ENCODE measurements at regions of chr5 and their contacts with region 1.

Region 1: GRCh38 chr5:93735378-93735777 is 6.0 kb downstream of the POU5F2 start:
- DNase-seq: peak; percentile 87
- H3K4me3 ChIP-seq: no peak overlapping the region
- H3K27ac ChIP-seq: no peak overlapping the region
- H3K4me1 ChIP-seq: peaks cover 7% of the 10 kb centered on the region
- H3K27me3 ChIP-seq: no peaks in the 10 kb centered on the region
- CTCF ChIP-seq: no peak
- POLR2A ChIP-seq: no peak

Region 2: DNA sequence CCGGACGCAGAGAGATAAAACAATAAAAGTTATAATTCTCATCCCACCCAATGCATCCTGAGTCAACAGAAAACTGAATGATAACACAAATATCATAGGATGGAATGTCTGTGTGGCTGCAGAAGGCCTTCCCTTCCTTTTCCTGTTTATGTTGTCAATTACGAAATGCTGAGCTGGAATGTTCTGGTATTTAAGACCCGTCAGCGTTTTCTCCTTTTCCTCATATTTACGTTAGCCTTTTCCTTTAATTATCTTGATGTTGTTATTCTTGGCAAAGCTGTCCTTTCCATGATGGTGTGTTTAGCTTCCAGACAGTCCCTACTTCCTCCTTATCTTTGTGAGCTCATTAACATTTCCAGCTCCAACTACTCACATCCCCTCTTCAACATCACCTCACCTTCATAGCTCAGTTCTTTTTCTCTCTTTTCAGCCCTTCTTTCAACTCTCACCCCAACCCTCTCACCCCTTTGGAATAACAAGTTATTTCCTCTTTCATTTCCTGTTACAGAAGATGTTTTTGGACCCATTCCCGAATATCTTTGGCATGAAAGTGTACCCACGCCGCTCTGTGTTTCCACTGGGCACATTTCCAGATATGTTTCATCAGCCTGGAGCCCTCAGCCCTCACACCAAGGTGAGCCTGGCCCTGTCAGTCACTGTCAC is 376.0 kb before region 1 on chr5:
- CTCF ChIA-PET with region 1: no interaction called
- POLR2A ChIA-PET with region 1: no interaction called
- dilution Hi-C with region 1: no loop called
- intact Hi-C with region 1: no loop called
- DNase-seq: peak; percentile 98
- H3K4me3 ChIP-seq: peak overlapping the region in 2 of 3 experiments; percentile 10 to 40
- H3K27ac ChIP-seq: peak overlapping the region; percentile 91
- H3K4me1 ChIP-seq: peaks cover 49% of the 10 kb centered on the region
- H3K27me3 ChIP-seq: no peaks in the 10 kb centered on the region
- CTCF ChIP-seq: no peak
- POLR2A ChIP-seq: peak; percentile 91

Region 3: GRCh38 chr5:93723005-93723404 is 12.4 kb before region 1 on chr5:
- CTCF ChIA-PET with region 1: interaction called, 19 read pairs
- POLR2A ChIA-PET with region 1: no interaction called
- dilution Hi-C with region 1: no loop called
- intact Hi-C with region 1: no loop called
- DNase-seq: peak; percentile 6
- H3K4me3 ChIP-seq: no peak overlapping the region
- H3K27ac ChIP-seq: no peak overlapping the region
- H3K4me1 ChIP-seq: no peaks in the 10 kb centered on the region
- H3K27me3 ChIP-seq: no peaks in the 10 kb centered on the region
- CTCF ChIP-seq: no peak
- POLR2A ChIP-seq: no peak